HEK293 (cell line): ENCODE measurements at regions of chr3 and their contacts with region 1.

Region 1: DNA sequence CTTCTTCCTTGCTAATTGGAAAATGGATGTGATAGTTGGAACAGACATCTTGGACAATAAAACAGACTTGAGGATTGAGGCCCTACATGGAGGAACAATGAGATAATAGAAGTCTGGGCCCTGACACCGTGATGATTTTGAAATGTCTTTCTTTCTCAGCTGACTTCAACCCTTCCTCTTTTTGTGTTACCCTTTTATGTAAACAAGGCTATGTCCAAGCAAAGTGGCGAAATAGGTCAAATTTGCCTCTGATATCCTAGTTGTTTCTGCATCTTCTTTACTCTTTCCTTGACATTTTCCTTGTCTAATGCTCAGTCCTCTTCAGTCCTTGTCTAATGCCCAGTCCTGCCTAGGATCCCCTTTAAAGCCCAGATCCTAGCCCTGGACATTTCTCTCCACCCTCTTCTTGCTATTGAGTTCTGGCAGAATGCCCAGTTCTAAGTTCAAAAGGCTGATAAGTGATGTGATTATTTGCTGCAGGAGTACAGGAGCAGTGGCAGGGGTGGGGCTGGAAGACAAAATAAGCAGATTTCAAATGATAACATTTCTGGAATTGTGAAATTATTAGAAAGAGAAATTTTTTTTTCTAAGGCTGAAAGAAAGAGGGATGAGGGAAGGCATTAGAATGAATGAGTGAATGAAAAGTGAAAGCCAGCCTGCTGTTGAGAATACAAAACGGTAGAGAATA is 6.5 kb upstream of the VPS8 start:
- H3K4me3 ChIP-seq: no peak overlapping the region
- H3K27ac ChIP-seq: no peak overlapping the region
- H3K4me1 ChIP-seq: peaks cover 5% of the 10 kb centered on the region
- CTCF ChIP-seq: no peak

Region 2: GRCh38 chr3:184786280-184786941 is 19.1 kb before region 1 on chr3:
- CTCF ChIA-PET with region 1: interaction called, 11 read pairs
- POLR2A ChIA-PET with region 1: no interaction called
- H3K4me3 ChIP-seq: no peak overlapping the region
- H3K27ac ChIP-seq: no peak overlapping the region
- H3K4me1 ChIP-seq: no peaks in the 10 kb centered on the region
- CTCF ChIP-seq: no peak

Region 3: GRCh38 chr3:184822654-184823053 is 17.2 kb after region 1 on chr3:
- CTCF ChIA-PET with region 1: interaction called, 10 read pairs
- POLR2A ChIA-PET with region 1: no interaction called
- H3K4me3 ChIP-seq: no peak overlapping the region
- H3K27ac ChIP-seq: no peak overlapping the region
- H3K4me1 ChIP-seq: no peaks in the 10 kb centered on the region
- CTCF ChIP-seq: no peak